ENCODE measurements at regions of chr14 and their contacts with region 1.

Region 1: GRCh38 chr14:101980251-101981099 is 16.1 kb downstream of the DYNC1H1 start:
- DNase-seq: peak; percentile 95 to 100
- H3K4me3 ChIP-seq: peak overlapping the region; percentile 5; the same call in 1 of the 2 replicates
- H3K27ac ChIP-seq: peak overlapping the region; percentile 88
- H3K4me1 ChIP-seq: peaks cover 54% of the 10 kb centered on the region
- H3K27me3 ChIP-seq: no peaks in the 10 kb centered on the region
- CTCF ChIP-seq: no peak

Region 2: GRCh38 chr14:101713621-101714349 is 266.7 kb before region 1 on chr14:
- CTCF ChIA-PET with region 1: no interaction called
- POLR2A ChIA-PET with region 1: no interaction called
- intact Hi-C with region 1: no loop called
- DNase-seq: no peak
- H3K4me3 ChIP-seq: no peak overlapping the region
- H3K27ac ChIP-seq: no peak overlapping the region
- H3K4me1 ChIP-seq: peaks cover 25% of the 10 kb centered on the region
- H3K27me3 ChIP-seq: no peaks in the 10 kb centered on the region
- CTCF ChIP-seq: no peak

Region 3: GRCh38 chr14:101917413-101918017 is 63.0 kb before region 1 on chr14:
- CTCF ChIA-PET with region 1: no interaction called
- POLR2A ChIA-PET with region 1: interaction called, 16 read pairs
- intact Hi-C with region 1: no loop called
- DNase-seq: no peak
- H3K4me3 ChIP-seq: no peak overlapping the region
- H3K27ac ChIP-seq: no peak overlapping the region
- H3K4me1 ChIP-seq: no peaks in the 10 kb centered on the region
- H3K27me3 ChIP-seq: no peaks in the 10 kb centered on the region
- CTCF ChIP-seq: no peak

Region 4: DNA sequence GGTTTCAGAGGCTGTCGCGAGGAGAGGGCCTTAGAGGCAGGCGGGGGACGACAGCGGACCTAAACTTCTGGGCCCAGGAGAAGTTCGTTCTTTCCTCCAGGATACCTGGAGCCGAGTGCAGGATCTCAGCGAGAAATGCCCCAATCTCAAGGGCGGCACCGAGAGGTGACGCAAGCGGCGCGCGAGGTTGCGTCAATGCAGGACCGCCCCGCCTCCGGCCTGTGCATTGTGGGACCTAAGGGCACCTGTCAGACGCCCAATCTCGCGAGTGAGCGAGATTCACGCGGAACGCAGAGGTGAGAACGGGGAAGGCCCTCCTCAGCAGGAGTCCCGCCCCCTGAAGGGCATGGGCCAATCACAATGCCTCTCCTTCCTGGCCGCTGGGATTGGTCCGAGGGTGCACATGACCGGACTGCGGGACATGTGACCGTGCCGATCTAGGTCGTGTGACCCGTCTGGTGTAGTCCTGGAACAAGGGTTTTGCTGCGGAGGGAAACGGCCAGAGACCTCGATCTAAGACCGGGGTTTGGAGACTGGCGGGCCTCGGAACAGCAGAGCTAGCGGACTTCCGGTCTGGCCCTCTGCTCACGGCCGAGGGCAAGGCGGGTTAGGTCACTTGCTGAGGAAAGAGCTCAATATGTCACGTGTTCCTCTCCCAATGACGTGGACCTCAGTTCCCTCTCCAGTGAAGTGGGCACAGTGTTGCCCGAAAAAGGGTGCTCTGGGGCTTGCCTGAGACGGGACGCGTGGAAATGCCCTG is 32.4 kb before region 1 on chr14:
- CTCF ChIA-PET with region 1: interaction called, 19 read pairs
- POLR2A ChIA-PET with region 1: no interaction called
- intact Hi-C with region 1: loop called (anchors 2 kb)
- DNase-seq: peak; percentile 100
- H3K4me3 ChIP-seq: peak overlapping the region; percentile 83
- H3K27ac ChIP-seq: peak overlapping the region; percentile 93
- H3K4me1 ChIP-seq: peaks cover 20% of the 10 kb centered on the region
- H3K27me3 ChIP-seq: no peaks in the 10 kb centered on the region
- CTCF ChIP-seq: no peak

Region 5: GRCh38 chr14:102462391-102462790 is 481.9 kb after region 1 on chr14:
- CTCF ChIA-PET with region 1: no interaction called
- POLR2A ChIA-PET with region 1: no interaction called
- intact Hi-C with region 1: no loop called
- DNase-seq: no peak
- H3K4me3 ChIP-seq: no peak overlapping the region
- H3K27ac ChIP-seq: no peak overlapping the region
- H3K4me1 ChIP-seq: no peaks in the 10 kb centered on the region
- H3K27me3 ChIP-seq: no peaks in the 10 kb centered on the region
- CTCF ChIP-seq: no peak

Region 6: GRCh38 chr14:102655170-102655569 is 674.7 kb after region 1 on chr14:
- CTCF ChIA-PET with region 1: no interaction called
- POLR2A ChIA-PET with region 1: no interaction called
- intact Hi-C with region 1: no loop called
- DNase-seq: peak; percentile 25 to 85
- H3K4me3 ChIP-seq: no peak overlapping the region
- H3K27ac ChIP-seq: peak overlapping the region; percentile 49
- H3K4me1 ChIP-seq: peaks cover 30% of the 10 kb centered on the region
- H3K27me3 ChIP-seq: no peaks in the 10 kb centered on the region
- CTCF ChIP-seq: no peak

Region 7: DNA sequence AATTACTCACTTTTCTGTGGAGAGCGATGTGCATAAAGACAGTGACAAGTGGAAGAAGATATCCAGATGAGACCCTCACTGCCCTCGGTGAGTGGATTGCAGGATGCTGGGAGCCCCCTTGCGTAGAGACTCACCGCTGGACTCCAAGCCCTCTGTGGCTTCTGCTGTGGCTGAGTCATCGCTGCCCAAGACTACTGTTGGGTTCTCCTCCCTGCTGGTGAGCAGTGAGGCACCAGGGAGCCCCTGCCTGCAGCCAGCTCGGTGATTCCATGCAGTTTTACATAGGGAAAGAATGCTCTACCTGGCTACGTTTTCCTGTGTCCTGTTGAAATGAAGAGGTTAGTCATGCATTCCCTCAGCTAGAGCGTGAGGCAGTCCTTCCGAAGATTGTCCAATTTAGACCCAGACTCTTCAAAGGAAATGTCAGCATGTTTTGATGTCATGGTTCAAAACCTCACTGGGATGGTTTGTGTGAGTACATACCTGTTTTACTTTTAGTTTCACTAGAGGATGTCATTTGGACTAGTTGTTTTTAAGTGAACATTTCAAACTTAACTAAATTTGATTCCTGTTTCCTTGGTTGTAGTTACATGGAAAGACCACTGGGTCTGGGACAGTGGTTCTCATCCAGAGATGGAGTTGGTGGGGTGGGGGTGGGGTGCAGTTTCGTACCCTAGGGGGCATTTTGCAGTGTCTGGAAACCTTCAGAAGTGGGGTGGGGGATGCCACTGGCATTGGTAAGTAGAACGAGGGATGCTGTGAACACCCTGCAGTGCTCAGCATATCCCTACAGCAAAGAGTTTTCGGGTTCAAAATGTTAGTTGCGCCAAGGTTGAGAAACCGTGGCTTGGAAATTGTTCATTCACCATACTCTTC is 825.1 kb after region 1 on chr14:
- CTCF ChIA-PET with region 1: no interaction called
- POLR2A ChIA-PET with region 1: no interaction called
- intact Hi-C with region 1: loop called (anchors 5 kb)
- DNase-seq: peak in 1 of 2 experiments; percentile 65
- H3K4me3 ChIP-seq: no peak overlapping the region
- H3K27ac ChIP-seq: no peak overlapping the region
- H3K4me1 ChIP-seq: no peaks in the 10 kb centered on the region
- H3K27me3 ChIP-seq: no peaks in the 10 kb centered on the region
- CTCF ChIP-seq: no peak

Measured in PC-9 (cell line).